ENCODE measurements at regions of chr20 and their contacts with region 1.

Region 1: DNA sequence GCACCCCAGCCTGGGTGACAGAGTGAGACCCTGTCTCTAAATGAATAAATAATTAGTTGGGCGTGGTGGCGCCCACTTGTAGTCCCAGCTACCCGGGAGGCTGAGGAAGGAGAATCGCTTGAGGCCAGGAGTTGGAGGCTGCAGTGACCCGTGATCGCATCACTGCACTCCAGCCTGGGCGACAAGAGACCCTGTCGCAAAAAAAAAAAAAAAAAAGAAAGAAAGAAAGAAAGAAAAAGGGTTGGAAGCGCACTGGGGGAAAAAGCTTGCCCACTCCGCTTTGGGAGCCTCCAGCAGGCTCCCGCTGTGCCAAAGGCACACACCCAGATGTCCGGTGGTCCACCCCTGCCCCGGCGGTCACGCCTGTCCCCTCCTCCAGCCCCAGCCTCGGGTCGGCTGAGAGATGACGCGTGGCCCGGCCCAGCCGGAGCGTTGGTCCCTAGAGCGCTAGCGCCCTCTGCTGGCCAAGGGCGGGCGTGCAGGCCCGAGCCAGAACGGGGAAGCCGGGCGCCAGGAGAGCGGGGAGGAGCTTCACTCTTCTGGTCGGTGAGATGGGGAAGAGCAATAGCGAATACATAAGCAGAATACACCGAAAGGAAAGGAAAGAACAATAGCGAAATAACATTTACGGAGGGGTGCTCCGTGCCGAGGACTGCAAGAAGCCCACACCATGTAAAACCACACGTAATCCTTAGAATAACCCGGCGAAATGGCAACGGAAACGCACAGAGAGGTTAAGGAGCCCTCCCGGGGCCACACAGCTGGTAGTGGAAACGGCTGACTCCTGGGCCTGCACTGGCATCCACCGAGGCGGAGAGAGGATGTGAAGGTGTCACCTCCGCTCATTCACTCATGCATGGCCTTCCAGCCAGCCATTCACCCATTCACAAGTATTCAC is 41.7 kb downstream of the UBE2V1 start:
- DNase-seq: peak; percentile 93
- ATAC-seq: peak; percentile 100
- H3K4me3 Mint-ChIP-seq: peak overlapping the region; percentile 39
- H3K27ac Mint-ChIP-seq: no peak overlapping the region
- H3K4me1 Mint-ChIP-seq: peaks cover 8% of the 10 kb centered on the region
- H3K27me3 Mint-ChIP-seq: peaks cover 2% of the 10 kb centered on the region

Region 2: DNA sequence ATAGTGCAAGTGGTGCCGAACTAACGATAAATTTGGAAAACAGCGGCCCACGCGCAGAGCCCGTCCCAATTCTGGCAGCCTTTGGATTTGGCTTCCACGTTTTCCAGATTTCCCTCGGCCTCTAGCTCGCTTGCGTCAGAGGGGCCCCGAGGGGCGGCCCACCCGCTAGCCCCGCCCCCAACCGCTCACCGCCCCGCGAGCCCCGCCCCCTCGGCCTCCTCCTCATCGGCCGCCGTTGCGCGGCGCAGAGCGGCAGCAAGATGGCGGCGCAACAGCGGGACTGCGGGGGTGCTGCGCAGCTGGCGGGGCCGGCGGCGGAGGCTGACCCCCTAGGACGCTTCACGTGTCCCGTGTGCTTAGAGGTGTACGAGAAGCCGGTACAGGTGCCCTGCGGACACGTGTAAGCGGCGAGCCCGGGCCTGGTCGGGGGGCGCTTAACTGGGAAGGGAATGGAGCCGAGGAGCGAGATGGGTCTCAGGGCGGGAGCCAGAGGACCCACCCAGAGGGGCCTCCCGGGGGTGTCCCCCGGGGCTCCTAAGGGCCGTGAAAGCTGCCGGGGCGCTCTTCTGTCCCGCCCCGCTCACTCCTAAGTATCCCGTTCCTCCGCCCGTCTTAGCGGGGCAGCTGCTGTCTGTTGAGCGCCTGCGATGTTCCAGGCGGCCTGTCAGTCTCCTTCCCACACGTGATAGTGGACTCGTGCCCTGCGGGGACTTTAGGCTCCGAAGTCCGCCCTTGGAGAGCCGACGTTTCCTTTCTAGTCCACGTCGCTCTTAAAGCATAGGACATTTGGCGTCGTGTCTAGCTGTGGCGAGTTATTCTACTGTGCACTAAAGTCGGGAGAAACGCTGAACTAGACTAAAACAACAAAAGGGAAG is 134.8 kb before region 1 on chr20 and contains the start of gene RNF114:
- CTCF ChIA-PET with region 1: interaction called, 26 read pairs
- POLR2A ChIA-PET with region 1: interaction called, 3 read pairs
- DNase-seq: peak; percentile 93
- ATAC-seq: peak; percentile 90
- H3K4me3 Mint-ChIP-seq: peak within 1 kb of the TSS; percentile 96
- H3K27ac Mint-ChIP-seq: peak within 1 kb of the TSS; percentile 94
- H3K4me1 Mint-ChIP-seq: peaks cover 43% of the 10 kb centered on the region
- H3K27me3 Mint-ChIP-seq: no peaks in the 10 kb centered on the region
- total RNA-seq, gene RNF114: 50.1 to 54.8 TPM

Region 3: DNA sequence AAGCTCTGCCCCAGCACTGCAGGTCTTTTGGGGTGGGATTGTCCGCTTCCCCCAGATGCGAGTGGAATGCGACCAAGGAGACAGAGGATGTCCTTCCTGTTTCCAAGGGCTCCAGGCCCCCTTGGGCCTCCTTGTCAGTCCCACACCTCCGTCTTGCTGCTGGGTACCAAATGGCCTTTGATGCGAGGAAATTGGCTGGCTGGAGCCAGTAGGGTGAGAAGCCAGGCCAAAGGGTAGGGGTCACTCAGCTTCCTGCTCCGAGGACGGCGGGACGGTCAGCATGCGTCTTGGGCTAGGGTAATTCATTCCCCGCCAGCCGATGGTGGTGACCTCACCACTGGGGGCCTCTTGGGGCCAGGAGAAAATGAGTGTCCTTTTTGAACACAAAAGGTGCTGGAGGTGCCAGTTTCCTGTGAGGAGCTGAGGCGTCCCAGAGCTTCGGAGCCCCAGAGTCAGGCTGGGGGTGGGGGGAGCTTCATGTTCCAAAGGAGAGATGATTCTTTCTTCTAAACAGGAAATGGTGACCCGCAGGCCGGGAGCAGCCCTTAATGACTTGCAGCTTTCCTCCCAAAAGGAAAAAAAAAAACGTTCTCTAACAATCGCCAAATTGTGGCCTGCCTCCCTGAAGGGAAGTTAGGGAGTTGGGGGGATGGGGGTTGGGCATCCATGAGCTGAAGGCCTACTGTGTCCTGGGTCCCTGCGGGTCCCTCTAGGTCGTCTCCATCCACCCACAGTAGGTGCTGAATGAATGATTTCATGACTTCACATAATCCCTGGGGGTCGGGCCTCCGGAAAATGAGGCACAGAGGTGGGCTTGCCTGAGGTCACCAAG is 81.8 kb before region 1 on chr20:
- CTCF ChIA-PET with region 1: interaction called, 408 read pairs
- POLR2A ChIA-PET with region 1: interaction called, 3 read pairs
- DNase-seq: no peak
- ATAC-seq: no peak
- H3K4me3 Mint-ChIP-seq: no peak overlapping the region
- H3K27ac Mint-ChIP-seq: no peak overlapping the region
- H3K4me1 Mint-ChIP-seq: peaks cover 12% of the 10 kb centered on the region
- H3K27me3 Mint-ChIP-seq: peaks cover 4% of the 10 kb centered on the region

Region 4: GRCh38 chr20:50020288-50020687 is 51.0 kb before region 1 on chr20:
- CTCF ChIA-PET with region 1: interaction called, 12 read pairs
- POLR2A ChIA-PET with region 1: no interaction called
- DNase-seq: peak; percentile 42
- ATAC-seq: peak; percentile 75
- H3K4me3 Mint-ChIP-seq: no peak overlapping the region
- H3K27ac Mint-ChIP-seq: no peak overlapping the region
- H3K4me1 Mint-ChIP-seq: peaks cover 12% of the 10 kb centered on the region
- H3K27me3 Mint-ChIP-seq: peaks cover 4% of the 10 kb centered on the region

Region 5: GRCh38 chr20:50101887-50102286 is 30.6 kb after region 1 on chr20:
- CTCF ChIA-PET with region 1: interaction called, 16 read pairs
- POLR2A ChIA-PET with region 1: no interaction called
- DNase-seq: no peak
- ATAC-seq: no peak
- H3K4me3 Mint-ChIP-seq: no peak overlapping the region
- H3K27ac Mint-ChIP-seq: peak overlapping the region; percentile 1
- H3K4me1 Mint-ChIP-seq: peaks cover 28% of the 10 kb centered on the region
- H3K27me3 Mint-ChIP-seq: no peaks in the 10 kb centered on the region

Region 6: GRCh38 chr20:50153485-50154377 is 82.5 kb after region 1 on chr20 and contains the start of gene PEDS1:
- CTCF ChIA-PET with region 1: interaction called, 11 read pairs
- POLR2A ChIA-PET with region 1: no interaction called
- DNase-seq: peak; percentile 87
- ATAC-seq: peak; percentile 99
- H3K4me3 Mint-ChIP-seq: peak within 1 kb of the TSS; percentile 78
- H3K27ac Mint-ChIP-seq: peak within 1 kb of the TSS; percentile 84
- H3K4me1 Mint-ChIP-seq: peaks cover 43% of the 10 kb centered on the region
- H3K27me3 Mint-ChIP-seq: no peaks in the 10 kb centered on the region
- total RNA-seq, gene PEDS1: 28.7 to 30.2 TPM

Region 7: DNA sequence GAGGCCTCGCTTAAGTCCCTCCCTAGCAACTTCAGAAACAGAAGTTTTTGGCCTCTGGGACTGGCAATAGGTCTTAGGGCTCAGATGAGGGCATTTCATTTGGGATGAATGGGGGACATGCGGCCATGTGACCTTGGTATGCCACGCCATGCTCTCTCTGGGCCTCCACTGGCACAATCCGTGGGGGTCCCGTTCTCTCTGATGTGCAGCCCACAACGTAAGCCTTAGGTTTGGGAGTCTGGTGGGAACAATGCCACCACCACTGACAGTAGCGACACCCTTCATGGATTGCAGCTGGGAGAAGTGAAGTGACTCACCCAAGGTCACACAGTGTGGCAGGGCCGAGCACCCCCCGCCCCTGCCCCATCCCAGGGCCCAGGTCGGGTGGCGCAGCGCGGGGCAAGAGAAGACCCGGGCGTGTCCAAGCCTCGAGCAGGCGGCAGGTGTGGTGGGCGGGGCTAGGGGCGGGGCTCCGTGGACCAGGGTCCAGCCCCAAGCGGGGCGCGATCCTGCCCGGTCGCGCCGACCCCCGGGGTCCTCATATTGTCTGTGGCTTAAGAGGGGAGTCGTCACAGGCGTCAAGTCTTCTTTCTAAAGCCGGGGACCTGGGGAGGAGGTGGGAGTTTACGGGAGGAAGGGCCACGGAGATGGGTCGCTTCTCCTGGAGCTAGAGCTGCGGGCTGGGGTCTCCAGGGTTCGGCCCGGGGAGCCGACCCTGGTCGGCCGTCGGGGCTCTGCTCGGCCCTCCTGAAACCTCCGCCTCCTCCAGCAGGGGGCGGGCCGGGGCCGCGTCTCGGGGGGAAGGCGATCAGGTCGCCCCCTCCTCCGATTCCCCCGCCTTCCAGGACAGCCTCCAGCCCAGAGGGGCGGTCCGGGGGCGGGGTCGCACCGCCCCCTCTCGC is 118.7 kb after region 1 on chr20:
- CTCF ChIA-PET with region 1: no interaction called
- POLR2A ChIA-PET with region 1: no interaction called
- DNase-seq: peak; percentile 89
- ATAC-seq: peak; percentile 54
- H3K4me3 Mint-ChIP-seq: peak overlapping the region; percentile 53
- H3K27ac Mint-ChIP-seq: peak overlapping the region; percentile 43
- H3K4me1 Mint-ChIP-seq: peaks cover 26% of the 10 kb centered on the region
- H3K27me3 Mint-ChIP-seq: peaks cover 11% of the 10 kb centered on the region

Region 8: GRCh38 chr20:50224531-50225255 is 153.5 kb after region 1 on chr20:
- CTCF ChIA-PET with region 1: no interaction called
- POLR2A ChIA-PET with region 1: no interaction called
- DNase-seq: no peak
- ATAC-seq: no peak
- H3K4me3 Mint-ChIP-seq: no peak overlapping the region
- H3K27ac Mint-ChIP-seq: no peak overlapping the region
- H3K4me1 Mint-ChIP-seq: peaks cover 25% of the 10 kb centered on the region
- H3K27me3 Mint-ChIP-seq: no peaks in the 10 kb centered on the region